Activated CD4-positive, alpha-beta memory T cell treated with anti-CD3 and anti-CD28 coated beads for 36 hours (primary cell): ENCODE measurements at regions of chr9 and their contacts with region 1.

Region 1: GRCh38 chr9:3732077-3733038 is 206.6 kb upstream of the RFX3 start:
- DNase-seq: peak; percentile 24
- H3K4me3 Mint-ChIP-seq: peak overlapping the region; percentile 5
- H3K27ac Mint-ChIP-seq: no peak overlapping the region
- H3K4me1 Mint-ChIP-seq: peaks cover 22% of the 10 kb centered on the region
- H3K27me3 Mint-ChIP-seq: no peaks in the 10 kb centered on the region

Region 2: GRCh38 chr9:3467593-3468219 is 264.7 kb before region 1 on chr9:
- CTCF ChIA-PET with region 1: interaction called, 4 read pairs
- POLR2A ChIA-PET with region 1: no interaction called
- intact Hi-C with region 1: loop called (anchors 2 kb)
- DNase-seq: peak; percentile 70
- H3K4me3 Mint-ChIP-seq: no peak overlapping the region
- H3K27ac Mint-ChIP-seq: no peak overlapping the region
- H3K4me1 Mint-ChIP-seq: peaks cover 13% of the 10 kb centered on the region
- H3K27me3 Mint-ChIP-seq: no peaks in the 10 kb centered on the region

Region 3: GRCh38 chr9:3698076-3698475 is 34.3 kb before region 1 on chr9:
- CTCF ChIA-PET with region 1: no interaction called
- POLR2A ChIA-PET with region 1: no interaction called
- intact Hi-C with region 1: no loop called
- DNase-seq: no peak
- H3K4me3 Mint-ChIP-seq: no peak overlapping the region
- H3K27ac Mint-ChIP-seq: no peak overlapping the region
- H3K4me1 Mint-ChIP-seq: no peaks in the 10 kb centered on the region
- H3K27me3 Mint-ChIP-seq: peaks cover 8% of the 10 kb centered on the region

Region 4: GRCh38 chr9:3863111-3863528 is 130.8 kb after region 1 on chr9:
- CTCF ChIA-PET with region 1: no interaction called
- POLR2A ChIA-PET with region 1: no interaction called
- intact Hi-C with region 1: loop called (anchors 10 kb)
- DNase-seq: no peak
- H3K4me3 Mint-ChIP-seq: no peak overlapping the region
- H3K27ac Mint-ChIP-seq: no peak overlapping the region
- H3K4me1 Mint-ChIP-seq: no peaks in the 10 kb centered on the region
- H3K27me3 Mint-ChIP-seq: peaks cover 17% of the 10 kb centered on the region

Region 5: GRCh38 chr9:4228606-4229005 is 496.2 kb after region 1 on chr9:
- CTCF ChIA-PET with region 1: interaction called, 6 read pairs
- POLR2A ChIA-PET with region 1: no interaction called
- intact Hi-C with region 1: loop called (anchors 2 kb)
- DNase-seq: no peak
- H3K4me3 Mint-ChIP-seq: no peak overlapping the region
- H3K27ac Mint-ChIP-seq: no peak overlapping the region
- H3K4me1 Mint-ChIP-seq: peaks cover 4% of the 10 kb centered on the region
- H3K27me3 Mint-ChIP-seq: peaks cover 5% of the 10 kb centered on the region

Region 6: GRCh38 chr9:4339357-4339756 is 607.0 kb after region 1 on chr9:
- CTCF ChIA-PET with region 1: interaction called, 26 read pairs
- POLR2A ChIA-PET with region 1: no interaction called
- intact Hi-C with region 1: loop called (anchors 1 kb)
- DNase-seq: peak; percentile 90
- H3K4me3 Mint-ChIP-seq: peak overlapping the region; percentile 58
- H3K27ac Mint-ChIP-seq: peak overlapping the region; percentile 79
- H3K4me1 Mint-ChIP-seq: peaks cover 7% of the 10 kb centered on the region
- H3K27me3 Mint-ChIP-seq: no peaks in the 10 kb centered on the region